Esophagus muscularis mucosa (tissue), 4 donors: ENCODE measurements at regions of chr6 and their contacts with region 1.

Region 1: GRCh38 chr6:105644073-105644489 is 241.2 kb upstream of the PREP start:
- DNase-seq: no peak
- H3K4me3 ChIP-seq: no peak overlapping the region
- H3K27ac ChIP-seq: peak overlapping the region; percentile 61 to 80 (median 75)
- H3K4me1 ChIP-seq: peaks cover 4 to 33% (median 30%) of the 10 kb centered on the region in 4 donors
- H3K27me3 ChIP-seq: no peaks in the 10 kb centered on the region
- CTCF ChIP-seq: peak; percentile 23 to 41 (median 41)
- EP300 ChIP-seq: no peak
- POLR2A ChIP-seq: no peak

Region 2: DNA sequence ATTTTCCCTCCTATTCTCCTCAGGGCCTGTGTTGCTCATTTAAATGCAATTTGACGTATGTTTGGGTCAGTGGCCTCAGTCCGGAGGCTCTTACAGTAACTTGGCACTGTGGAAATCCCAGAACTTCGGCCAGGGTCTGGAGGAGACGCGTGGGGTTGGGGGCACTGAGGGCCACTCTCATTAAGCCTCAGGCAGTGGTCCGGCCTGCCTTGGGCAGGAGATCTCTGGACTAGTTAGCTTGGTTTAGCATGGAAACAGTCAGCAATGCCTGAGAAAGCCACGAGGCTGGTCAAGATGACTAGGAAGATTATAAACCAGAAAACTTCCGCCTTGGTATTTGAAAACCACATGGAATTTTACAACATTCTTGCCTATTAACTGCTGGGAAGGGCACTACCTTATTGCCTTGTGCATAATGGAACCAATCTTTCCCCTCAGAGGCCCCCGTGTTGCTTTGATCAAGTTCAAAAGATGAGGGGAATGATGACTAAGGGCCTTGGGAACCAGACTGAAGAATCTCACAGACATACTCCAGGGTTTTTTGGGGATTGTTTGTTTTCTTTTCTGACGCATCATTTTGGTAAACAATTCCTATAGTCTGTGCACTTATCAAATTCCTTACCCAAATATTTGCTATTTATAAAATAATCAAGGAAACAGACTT is 35.2 kb before region 1 on chr6:
- intact Hi-C with region 1: loop called (anchors 5 kb)
- DNase-seq: no peak
- H3K4me3 ChIP-seq: no peak overlapping the region
- H3K27ac ChIP-seq: peak overlapping the region in 1 of 4 donors; percentile 28
- H3K4me1 ChIP-seq: peaks cover 18 to 36% (median 32%) of the 10 kb centered on the region in 4 donors
- H3K27me3 ChIP-seq: no peaks in the 10 kb centered on the region
- CTCF ChIP-seq: no peak
- EP300 ChIP-seq: no peak
- POLR2A ChIP-seq: no peak